Psoas muscle (tissue), 8 donors: ENCODE measurements at regions of chr22 and their contacts with region 1.

Region 1: DNA sequence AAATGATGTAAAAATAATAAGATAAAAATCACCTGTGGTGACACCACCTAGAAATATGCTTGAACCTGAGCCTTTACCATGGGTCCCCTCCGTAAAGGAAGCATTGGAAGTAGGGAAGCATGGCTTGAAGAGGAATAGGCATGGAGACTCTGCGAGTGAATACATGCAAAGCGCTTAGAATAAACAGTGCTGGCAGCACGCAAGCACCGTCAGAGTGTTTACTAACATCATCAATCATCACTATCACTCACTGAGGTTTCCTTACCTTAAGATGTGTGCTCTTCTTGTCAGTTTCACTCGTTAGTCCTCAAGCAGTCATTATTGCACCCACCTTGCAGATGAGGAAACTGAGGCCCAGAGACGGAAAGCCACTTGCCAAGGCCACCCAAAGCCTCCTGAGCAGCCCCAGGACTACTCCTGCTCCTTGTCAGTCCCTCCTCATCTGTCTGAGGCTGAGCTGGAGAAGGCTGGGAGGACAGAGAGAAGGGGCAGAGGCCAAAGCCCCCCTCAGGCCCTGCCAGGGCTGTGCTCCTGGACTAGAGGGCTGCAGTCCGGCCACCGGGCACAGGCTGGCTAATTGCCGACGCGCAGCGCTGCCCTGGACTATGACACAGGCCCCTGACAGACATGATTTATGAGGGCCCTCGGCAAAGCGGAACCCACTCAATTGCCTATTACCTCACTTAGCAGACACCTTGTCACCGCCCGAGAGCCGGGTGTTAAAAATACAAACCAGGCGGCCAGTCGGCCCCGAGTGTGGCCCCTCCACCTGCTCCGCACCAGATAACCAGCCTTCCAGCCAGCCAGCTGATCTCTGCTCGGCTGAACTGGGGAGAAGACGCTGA is 168.9 kb downstream of the MN1 start:
- DNase-seq: no peak
- ATAC-seq: peak in 2 of 4 donors; percentile 4 to 7
- H3K4me3 ChIP-seq: no peak overlapping the region
- H3K27ac ChIP-seq: no peak overlapping the region
- H3K4me1 ChIP-seq: peaks cover 13% of the 10 kb centered on the region
- H3K27me3 ChIP-seq: no peaks in the 10 kb centered on the region
- CTCF ChIP-seq: no peak

Region 2: DNA sequence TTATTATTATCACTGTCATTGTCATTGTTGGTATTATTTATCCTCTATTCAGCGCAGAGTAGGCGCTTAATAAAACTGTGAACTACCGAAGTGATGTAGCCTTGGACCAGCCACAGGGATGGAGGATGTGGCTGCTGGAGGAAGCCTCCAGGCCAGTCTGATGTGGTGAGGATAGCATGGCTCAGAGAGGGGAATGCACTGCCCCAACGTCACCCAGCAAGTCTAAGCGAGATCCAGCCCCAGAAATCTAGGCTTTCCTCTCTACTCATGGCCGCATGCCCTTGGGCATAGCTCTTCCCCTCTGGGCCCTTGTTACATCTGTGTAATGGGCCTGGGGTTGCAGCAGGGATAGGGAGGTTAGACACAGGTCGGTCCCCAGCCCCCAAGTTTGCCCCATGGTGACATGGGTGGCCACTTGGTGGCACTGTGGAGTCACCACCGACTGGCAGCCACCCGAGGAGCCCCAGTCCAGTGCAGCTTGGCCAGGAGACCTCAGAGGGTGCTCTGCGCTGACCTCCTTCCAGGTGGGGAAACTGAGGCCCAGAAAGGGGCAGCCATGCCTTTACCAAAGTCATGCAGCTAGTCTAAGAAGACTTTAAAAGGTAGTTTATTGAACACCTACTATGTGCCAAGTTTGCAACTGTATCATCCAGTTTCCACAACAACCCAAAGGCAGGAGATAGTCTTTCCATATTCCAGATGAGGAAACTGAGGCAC is 226.8 kb before region 1 on chr22:
- intact Hi-C with region 1: loop called in 1 of 2 experiments (anchors 5 kb)
- DNase-seq: peak; percentile 65 to 78
- ATAC-seq: peak; percentile 83 to 94 (median 88)
- H3K4me3 ChIP-seq: no peak overlapping the region
- H3K27ac ChIP-seq: no peak overlapping the region
- H3K4me1 ChIP-seq: no peaks in the 10 kb centered on the region
- H3K27me3 ChIP-seq: peaks cover 0 to 7% (median 0%) of the 10 kb centered on the region in 3 donors
- CTCF ChIP-seq: peak; percentile 78

Region 3: GRCh38 chr22:27507111-27507611 is 125.5 kb before region 1 on chr22:
- intact Hi-C with region 1: loop called in 1 of 2 experiments (anchors 5 kb)
- DNase-seq: no peak
- ATAC-seq: no peak
- H3K4me3 ChIP-seq: no peak overlapping the region
- H3K27ac ChIP-seq: no peak overlapping the region
- H3K4me1 ChIP-seq: peaks cover 50% of the 10 kb centered on the region
- H3K27me3 ChIP-seq: no peaks in the 10 kb centered on the region
- CTCF ChIP-seq: no peak

Region 4: DNA sequence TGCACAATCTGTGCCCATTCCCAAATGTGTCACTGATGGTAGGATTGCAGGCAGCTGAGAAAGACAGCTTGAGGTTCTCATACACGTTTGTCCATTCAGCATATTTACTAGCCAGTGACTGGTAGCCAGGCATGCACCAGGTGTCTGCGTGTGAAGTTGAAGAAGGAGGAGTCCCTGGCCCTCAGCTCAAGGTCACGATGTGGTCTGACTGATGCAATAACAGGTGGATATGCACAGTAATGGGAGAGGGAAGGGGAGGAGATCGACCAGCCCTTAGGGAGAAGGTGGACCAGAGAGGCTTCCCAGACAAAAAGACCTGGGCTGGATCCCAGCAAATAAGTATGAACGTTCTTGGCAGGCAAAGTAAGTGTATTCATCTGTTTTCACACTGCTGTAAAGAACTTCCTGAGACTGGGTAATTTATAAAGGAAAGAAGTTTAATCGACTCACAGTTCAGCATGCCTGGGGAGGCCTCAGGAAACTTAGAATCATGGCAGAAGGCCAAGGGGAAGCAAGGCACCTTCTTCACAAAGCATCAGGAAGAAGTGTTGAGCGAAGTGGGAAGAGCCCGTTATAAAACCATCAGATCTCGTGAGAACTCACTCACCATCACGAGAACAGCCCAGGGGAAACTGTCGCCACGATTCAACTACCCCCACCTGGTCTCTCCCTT is 72.9 kb after region 1 on chr22:
- intact Hi-C with region 1: no loop called
- DNase-seq: no peak
- ATAC-seq: peak; percentile 81 to 98 (median 88)
- H3K4me3 ChIP-seq: no peak overlapping the region
- H3K27ac ChIP-seq: peak overlapping the region; percentile 53
- H3K4me1 ChIP-seq: peaks cover 13% of the 10 kb centered on the region
- H3K27me3 ChIP-seq: no peaks in the 10 kb centered on the region
- CTCF ChIP-seq: no peak

Region 5: DNA sequence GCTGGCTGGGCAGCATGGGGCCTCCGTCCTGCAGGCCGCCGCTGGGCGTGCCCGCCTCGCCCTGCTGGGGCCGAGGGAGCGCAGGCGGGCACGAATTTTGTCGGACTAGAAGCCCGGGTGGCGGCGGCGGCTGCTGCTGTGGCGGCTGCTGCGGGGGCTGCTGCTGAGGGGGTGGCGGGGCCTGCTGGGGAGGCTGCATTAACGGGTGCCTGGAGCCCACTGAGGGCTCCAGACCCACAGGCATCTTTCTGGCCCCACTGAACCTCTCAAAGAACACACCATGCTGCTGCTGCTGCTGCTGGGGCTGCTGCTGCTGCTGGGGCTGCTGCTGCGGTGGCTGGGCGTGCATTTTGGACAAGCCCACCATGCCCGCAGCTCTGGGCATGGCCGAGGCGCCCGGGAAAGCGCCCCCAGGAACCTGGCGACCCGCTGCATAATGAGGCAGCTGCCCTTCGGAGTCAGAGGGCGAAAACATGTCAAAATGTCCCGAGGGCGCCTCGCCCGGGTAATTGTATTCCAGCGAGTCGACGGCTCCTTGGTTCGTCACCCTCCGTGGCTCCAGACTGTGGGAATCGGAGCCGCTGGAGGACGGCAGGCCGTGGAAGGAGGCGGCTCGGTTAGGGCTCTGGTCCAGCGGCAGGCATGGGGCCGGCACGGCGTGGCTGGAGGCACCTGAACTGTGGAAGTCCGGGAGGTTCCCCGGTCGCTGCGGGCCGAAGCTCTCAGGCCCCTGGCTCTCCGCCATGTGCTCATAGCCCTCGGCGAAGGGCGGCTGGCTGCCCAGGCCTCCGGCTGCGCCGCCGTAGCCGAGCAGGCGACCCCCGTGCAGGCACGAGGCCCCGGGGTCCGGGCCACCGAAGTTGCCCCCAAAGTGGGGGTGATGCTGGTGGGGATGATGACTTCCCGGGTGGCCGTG is 166.9 kb after region 1 on chr22:
- intact Hi-C with region 1: loop called (anchors 5 kb)
- DNase-seq: peak; percentile 53 to 79
- ATAC-seq: peak; percentile 14 to 30 (median 20)
- H3K4me3 ChIP-seq: peak overlapping the region; percentile 95
- H3K27ac ChIP-seq: peak overlapping the region; percentile 94
- H3K4me1 ChIP-seq: peaks cover 44% of the 10 kb centered on the region
- H3K27me3 ChIP-seq: no peaks in the 10 kb centered on the region
- CTCF ChIP-seq: no peak

Region 6: GRCh38 chr22:27825174-27825573 is 192.5 kb after region 1 on chr22:
- intact Hi-C with region 1: no loop called
- DNase-seq: no peak
- ATAC-seq: no peak
- H3K4me3 ChIP-seq: no peak overlapping the region
- H3K27ac ChIP-seq: no peak overlapping the region
- H3K4me1 ChIP-seq: no peaks in the 10 kb centered on the region
- H3K27me3 ChIP-seq: peaks cover 0 to 2% (median 0%) of the 10 kb centered on the region in 3 donors
- CTCF ChIP-seq: peak; percentile 20